BJ (cell line): ENCODE measurements at regions of chr1 and their contacts with region 1.

Region 1: GRCh38 chr1:201447911-201448871 is 20.8 kb downstream of the PHLDA3 start:
- DNase-seq: no peak
- H3K4me3 ChIP-seq: no peak overlapping the region
- H3K27me3 ChIP-seq: peaks cover 1% of the 10 kb centered on the region; the same call in 1 of the 2 replicates
- CTCF ChIP-seq: peak; percentile 88

Region 2: GRCh38 chr1:201254625-201255506 is 193.3 kb before region 1 on chr1:
- CTCF ChIA-PET with region 1: no interaction called
- POLR2A ChIA-PET with region 1: no interaction called
- DNase-seq: no peak
- H3K4me3 ChIP-seq: no peak overlapping the region
- H3K27me3 ChIP-seq: peaks cover 1% of the 10 kb centered on the region; the same call in 1 of the 2 replicates
- CTCF ChIP-seq: peak; percentile 99

Region 3: DNA sequence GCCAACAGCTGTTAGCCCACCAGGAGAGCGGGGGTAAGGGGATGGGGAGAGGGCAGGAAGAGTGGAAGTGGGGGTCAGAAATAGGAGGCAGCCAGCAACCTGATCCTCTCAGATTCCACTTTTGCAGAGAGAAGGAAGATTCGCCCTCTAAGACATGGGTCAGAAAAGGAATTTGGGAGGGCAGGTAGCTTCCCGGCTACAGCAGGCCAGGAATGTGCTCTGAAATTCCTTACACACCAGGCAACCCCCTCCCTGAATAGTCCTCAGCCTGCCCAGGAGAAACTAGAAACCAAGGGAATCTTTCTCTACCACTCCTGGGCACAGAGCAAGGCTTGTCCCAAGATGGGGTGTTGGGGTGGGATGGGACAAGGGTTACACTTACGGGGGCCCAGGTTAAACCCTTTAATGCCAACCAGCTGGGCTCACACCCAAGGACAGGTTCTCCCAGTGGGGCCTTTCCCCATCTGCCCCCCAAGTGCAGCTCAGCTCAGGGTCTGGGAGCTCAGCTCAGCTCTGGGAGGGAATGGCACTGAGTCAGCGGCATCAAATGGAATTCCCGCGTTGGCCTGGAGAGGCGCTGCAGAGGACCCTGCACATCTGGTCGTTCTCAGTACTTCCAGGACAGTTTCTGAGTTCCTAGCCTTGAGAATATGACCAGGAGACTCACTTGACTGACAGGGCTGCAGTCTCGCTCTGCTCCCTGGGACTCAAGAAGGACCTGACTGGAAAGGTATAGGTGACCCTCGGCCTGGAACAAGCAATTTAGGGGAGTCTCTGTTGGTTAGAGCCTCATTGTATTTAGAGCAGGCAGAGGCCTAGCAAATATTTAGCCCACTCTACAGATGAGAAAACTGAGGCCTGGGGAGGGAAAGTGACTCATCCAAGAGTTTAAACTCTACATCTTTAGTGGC is 71.5 kb before region 1 on chr1:
- CTCF ChIA-PET with region 1: no interaction called
- POLR2A ChIA-PET with region 1: no interaction called
- DNase-seq: peak; percentile 2
- H3K4me3 ChIP-seq: no peak overlapping the region
- H3K27me3 ChIP-seq: peaks cover 27% of the 10 kb centered on the region
- CTCF ChIP-seq: peak; percentile 61

Region 4: DNA sequence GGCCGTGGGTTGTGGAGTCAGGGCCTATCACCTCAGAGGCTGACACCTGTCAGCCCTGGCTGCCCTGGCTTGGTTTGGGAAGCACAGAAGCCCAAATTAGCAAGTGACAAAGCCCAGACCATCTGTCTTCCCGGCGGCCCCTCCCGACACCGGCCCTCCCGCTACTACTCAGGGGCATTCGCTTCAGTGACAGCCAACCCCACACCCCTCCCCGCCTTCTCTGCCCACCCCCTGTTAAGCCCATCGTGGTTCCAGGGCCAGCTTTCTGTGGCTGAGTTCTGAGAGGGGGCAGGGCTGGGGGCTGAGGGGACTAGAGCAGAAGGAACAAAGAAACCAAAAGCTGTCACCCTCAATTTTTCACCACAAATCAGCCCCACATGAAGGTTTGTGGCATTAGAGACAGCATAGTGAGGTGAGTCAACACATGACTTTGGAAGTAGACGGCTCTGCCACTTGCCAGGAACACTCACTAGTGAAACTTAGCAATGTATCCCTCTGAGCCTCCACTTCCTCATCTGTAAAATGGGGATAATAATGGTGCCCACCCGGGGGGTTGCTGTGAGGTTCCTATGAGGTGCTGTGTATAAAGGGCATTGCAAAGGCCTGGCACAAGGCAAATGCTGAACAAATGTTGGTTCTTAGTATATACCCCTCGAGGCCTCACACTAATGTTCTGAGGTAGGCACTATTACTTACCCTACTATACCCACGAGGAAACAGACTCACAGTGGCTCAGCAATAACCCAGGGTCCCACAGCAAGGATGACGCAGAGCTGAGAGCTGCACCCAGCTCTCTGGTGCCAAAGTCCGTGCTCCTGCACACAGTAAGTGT is 21.5 kb before region 1 on chr1:
- CTCF ChIA-PET with region 1: no interaction called
- POLR2A ChIA-PET with region 1: no interaction called
- DNase-seq: no peak
- H3K4me3 ChIP-seq: no peak overlapping the region
- H3K27me3 ChIP-seq: peaks cover 11% of the 10 kb centered on the region
- CTCF ChIP-seq: no peak

Region 5: GRCh38 chr1:201468844-201469511 is 20.8 kb after region 1 on chr1 and contains the start of gene PHLDA3:
- CTCF ChIA-PET with region 1: interaction called, 73 read pairs
- POLR2A ChIA-PET with region 1: no interaction called
- DNase-seq: peak; percentile 70
- H3K4me3 ChIP-seq: peak within 1 kb of the TSS; percentile 67
- H3K27me3 ChIP-seq: no peaks in the 10 kb centered on the region
- CTCF ChIP-seq: 0 out of 2 replicates have a peak, but pooled peaks have one; percentile 3
- polyA plus RNA-seq, gene PHLDA3: 87.3 and 130 TPM in 2 replicates

Region 6: GRCh38 chr1:201476670-201477344 is 28.6 kb after region 1 on chr1:
- CTCF ChIA-PET with region 1: interaction called, 121 read pairs
- POLR2A ChIA-PET with region 1: no interaction called
- DNase-seq: no peak
- H3K4me3 ChIP-seq: no peak overlapping the region
- H3K27me3 ChIP-seq: no peaks in the 10 kb centered on the region
- CTCF ChIP-seq: no peak

Region 7: GRCh38 chr1:201481761-201482493 is 33.7 kb after region 1 on chr1:
- CTCF ChIA-PET with region 1: interaction called, 121 read pairs
- POLR2A ChIA-PET with region 1: no interaction called
- DNase-seq: no peak
- H3K4me3 ChIP-seq: no peak overlapping the region
- H3K27me3 ChIP-seq: no peaks in the 10 kb centered on the region
- CTCF ChIP-seq: peak; percentile 93

Region 8: DNA sequence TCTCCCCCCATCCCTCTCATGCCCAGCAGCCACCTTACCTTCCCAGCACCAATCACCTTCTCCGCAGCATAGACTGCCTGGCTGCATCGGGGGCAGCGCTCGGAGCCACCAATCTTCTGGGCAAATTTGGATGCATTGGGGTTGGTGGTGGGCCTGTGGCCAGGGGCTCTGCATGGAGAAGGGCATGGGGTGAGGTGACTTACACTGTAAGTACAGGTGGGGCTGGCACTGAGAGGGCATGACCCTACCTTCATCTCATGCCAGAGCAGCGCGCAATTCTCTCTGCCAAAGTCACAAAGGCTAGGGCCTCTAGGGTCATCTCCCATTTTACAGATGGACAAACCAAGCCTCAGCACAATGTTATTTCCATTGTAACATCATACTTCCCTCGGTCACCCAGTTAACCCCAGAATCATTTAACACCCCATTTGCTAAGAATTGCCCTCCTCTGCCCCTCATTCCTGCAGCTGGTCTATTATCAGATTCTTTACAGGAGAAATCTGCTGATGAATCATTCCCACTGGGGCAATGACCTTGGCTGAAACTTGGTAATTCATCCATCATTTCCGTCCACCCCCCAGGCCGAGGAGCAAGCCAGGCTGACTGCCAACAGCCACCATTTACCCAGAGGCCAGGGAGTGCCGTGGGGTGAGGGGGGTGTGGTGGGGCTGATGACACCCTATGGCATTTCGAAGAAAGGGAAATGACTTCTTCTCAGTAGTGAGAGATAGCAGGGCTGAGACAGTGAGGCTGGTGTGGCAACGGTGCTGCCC is 40.8 kb after region 1 on chr1:
- CTCF ChIA-PET with region 1: interaction called, 121 read pairs
- POLR2A ChIA-PET with region 1: no interaction called
- DNase-seq: peak; percentile 89
- H3K4me3 ChIP-seq: no peak overlapping the region
- H3K27me3 ChIP-seq: no peaks in the 10 kb centered on the region
- CTCF ChIP-seq: no peak

Region 9: GRCh38 chr1:201506556-201507359 is 58.6 kb after region 1 on chr1 and contains the start of gene CSRP1:
- CTCF ChIA-PET with region 1: interaction called, 132 read pairs
- POLR2A ChIA-PET with region 1: no interaction called
- DNase-seq: no peak
- H3K4me3 ChIP-seq: peak within 1 kb of the TSS; percentile 69
- H3K27me3 ChIP-seq: no peaks in the 10 kb centered on the region
- CTCF ChIP-seq: no peak
- polyA plus RNA-seq, gene CSRP1: 720 and 957 TPM in 2 replicates